OCI-LY7 (cell line): ENCODE measurements at regions of chr1 and their contacts with region 1.

Region 1: GRCh38 chr1:117605774-117606648 is at the start of gene TENT5C:
- DNase-seq: peak; percentile 99
- H3K4me3 ChIP-seq: peak within 1 kb of the TSS; percentile 90
- H3K27ac ChIP-seq: peak within 1 kb of the TSS; percentile 35
- H3K4me1 ChIP-seq: peaks cover 27% of the 10 kb centered on the region
- CTCF ChIP-seq: no peak
- total RNA-seq, gene TENT5C: 11.6 and 13.3 TPM in 2 replicates

Region 2: DNA sequence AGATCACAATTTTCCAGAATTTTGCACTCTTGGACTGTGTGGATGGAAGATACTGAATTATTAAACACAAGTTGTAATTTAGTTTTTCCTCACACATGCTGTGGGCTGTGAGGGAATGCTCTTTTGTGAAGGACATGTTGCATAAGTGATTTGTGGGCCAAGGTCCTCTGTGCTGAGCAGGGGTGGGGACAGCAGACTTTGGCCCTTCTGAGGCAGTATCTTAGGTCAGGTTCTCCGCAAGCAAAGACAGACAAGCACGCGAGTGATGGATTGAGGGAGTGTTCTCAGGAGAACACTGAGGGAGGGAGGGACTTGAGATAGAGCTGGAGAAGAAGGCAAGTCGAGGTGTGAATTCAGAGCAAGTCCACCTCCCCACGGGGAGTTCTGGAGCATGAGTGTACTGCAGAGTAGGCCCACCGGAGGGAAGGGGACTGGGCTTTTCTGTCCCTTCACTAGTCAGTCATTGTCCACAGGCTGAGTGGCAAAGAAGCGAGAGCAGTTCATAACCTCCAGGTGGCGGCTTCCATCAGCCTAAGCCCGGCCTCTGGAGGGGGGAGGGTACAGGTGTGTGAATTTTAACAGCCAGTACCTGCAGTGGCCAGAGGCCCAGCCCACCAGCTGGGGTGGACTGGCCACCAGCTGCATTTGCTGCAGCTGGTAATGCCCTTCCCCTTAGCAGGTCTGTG is 623.5 kb before region 1 on chr1:
- CTCF ChIA-PET with region 1: no interaction called
- POLR2A ChIA-PET with region 1: no interaction called
- intact Hi-C with region 1: no loop called
- DNase-seq: no peak
- H3K4me3 ChIP-seq: no peak overlapping the region
- H3K27ac ChIP-seq: no peak overlapping the region
- H3K4me1 ChIP-seq: no peaks in the 10 kb centered on the region
- CTCF ChIP-seq: no peak

Region 3: DNA sequence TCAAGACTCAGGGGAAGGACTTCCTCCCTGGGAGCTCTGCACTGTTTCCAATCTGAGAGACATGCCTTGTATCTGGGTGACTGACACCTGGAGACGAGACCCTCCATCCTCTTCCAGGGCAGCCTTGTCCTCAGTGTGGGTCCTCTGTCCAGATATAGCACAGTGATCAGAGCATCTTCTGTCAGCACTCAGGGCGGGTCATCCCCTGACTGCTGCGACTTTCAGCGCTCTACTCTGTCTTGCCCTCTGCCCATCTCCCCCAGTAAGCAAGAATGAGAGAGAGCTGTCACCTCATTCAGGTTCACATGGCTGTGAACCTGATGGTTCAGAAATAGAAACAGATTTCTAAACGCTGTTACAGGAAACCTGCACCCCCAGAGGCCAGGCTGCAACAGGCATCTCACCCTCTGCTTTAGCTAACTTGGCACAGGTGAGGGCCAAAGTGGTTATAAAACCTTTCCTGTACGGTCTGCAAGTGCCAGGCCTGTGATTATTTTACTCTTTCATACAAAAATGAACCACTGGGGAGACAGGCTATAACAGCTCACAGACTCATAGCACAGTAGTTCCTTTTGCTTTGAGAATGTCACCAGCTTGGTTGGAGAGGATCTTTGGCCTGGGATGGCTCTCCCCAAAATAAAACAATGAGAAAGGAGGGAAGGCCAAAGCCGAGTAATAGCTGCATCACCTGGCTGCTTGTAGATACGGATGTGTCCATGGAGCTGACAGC is 11.6 kb before region 1 on chr1:
- CTCF ChIA-PET with region 1: interaction called, 3 read pairs
- POLR2A ChIA-PET with region 1: interaction called, 12 read pairs
- intact Hi-C with region 1: no loop called
- DNase-seq: peak; percentile 67
- H3K4me3 ChIP-seq: no peak overlapping the region
- H3K27ac ChIP-seq: peak overlapping the region; percentile 14
- H3K4me1 ChIP-seq: peaks cover 30% of the 10 kb centered on the region
- CTCF ChIP-seq: peak; percentile 67

Region 4: DNA sequence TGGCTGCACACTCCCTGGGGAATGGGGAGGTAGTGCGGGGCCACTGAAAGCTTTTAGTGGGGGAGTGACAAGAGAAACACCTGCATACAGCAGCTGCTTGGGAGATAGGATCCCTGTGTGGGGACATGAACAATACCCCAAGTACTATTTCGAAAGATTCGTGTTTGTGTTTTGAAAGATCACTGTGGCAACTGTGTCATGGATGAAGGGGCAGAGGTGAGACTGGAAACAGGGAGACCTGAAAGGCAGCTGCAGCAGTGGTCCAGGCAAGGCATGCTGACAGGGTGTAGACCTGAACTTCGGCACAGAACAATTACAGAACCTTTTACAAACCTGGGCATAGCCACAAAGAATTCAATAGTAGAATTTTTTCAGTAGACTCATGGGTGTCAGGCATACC is 32.7 kb after region 1 on chr1:
- CTCF ChIA-PET with region 1: no interaction called
- POLR2A ChIA-PET with region 1: interaction called, 281 read pairs
- intact Hi-C with region 1: loop called (anchors 1 kb)
- DNase-seq: peak; percentile 83
- H3K4me3 ChIP-seq: peak overlapping the region; percentile 26
- H3K27ac ChIP-seq: peak overlapping the region; percentile 70
- H3K4me1 ChIP-seq: peaks cover 100% of the 10 kb centered on the region
- CTCF ChIP-seq: no peak

Region 5: DNA sequence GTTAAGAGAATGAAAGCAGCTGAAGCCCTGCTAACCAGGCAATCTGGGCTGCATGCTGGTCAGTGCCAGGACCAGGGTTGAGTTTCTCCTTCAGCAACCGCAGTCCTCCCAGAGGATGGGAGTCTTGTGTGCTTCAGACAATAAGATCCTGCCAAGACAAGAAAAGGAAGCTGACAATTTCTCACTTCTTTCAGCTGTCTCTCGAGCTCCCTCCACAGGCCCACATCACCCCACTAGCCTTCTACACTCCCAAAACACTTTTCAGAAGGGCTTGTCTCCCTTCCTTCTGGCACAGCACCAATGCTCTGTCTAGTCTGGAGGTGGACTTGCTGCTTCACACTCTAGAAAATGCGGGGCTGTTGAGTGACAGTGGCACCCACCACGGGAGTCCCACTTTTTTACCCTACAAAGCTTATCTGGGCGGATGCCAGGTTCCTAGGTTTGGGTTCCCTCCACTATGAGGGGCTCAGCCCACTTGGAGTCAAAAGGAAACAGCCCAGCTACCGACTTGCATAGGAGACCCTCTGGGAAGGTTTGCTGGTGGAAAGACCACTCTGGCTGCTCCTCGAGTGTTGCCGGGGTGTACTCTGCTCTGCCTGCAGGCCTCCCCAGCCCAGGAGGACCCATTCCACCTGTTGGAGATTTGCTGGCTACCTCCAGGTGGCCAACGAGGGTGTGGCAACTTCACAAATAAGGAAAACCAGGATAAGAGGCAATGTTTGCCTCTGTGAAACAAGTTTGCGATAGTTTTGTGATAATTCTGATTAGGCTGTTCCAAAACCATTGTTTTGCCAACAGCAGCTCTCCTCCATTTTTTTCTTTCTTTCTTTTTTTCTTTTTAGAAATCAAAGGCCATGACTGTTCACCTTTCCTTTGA is 68.7 kb after region 1 on chr1:
- CTCF ChIA-PET with region 1: interaction called, 4 read pairs
- POLR2A ChIA-PET with region 1: interaction called, 9 read pairs
- intact Hi-C with region 1: loop called (anchors 1 kb)
- DNase-seq: peak; percentile 87
- H3K4me3 ChIP-seq: no peak overlapping the region
- H3K27ac ChIP-seq: peak overlapping the region; percentile 1
- H3K4me1 ChIP-seq: peaks cover 54% of the 10 kb centered on the region
- CTCF ChIP-seq: peak; percentile 92

Region 6: GRCh38 chr1:117710710-117711109 is 104.7 kb after region 1 on chr1:
- CTCF ChIA-PET with region 1: no interaction called
- POLR2A ChIA-PET with region 1: no interaction called
- intact Hi-C with region 1: no loop called
- DNase-seq: peak; percentile 45
- H3K4me3 ChIP-seq: no peak overlapping the region
- H3K27ac ChIP-seq: no peak overlapping the region
- H3K4me1 ChIP-seq: no peaks in the 10 kb centered on the region
- CTCF ChIP-seq: peak; percentile 80

Region 7: GRCh38 chr1:117758444-117759316 is 152.7 kb after region 1 on chr1:
- CTCF ChIA-PET with region 1: no interaction called
- POLR2A ChIA-PET with region 1: interaction called, 3 read pairs
- intact Hi-C with region 1: loop called (anchors 5 kb)
- DNase-seq: peak; percentile 89
- H3K4me3 ChIP-seq: no peak overlapping the region
- H3K27ac ChIP-seq: no peak overlapping the region
- H3K4me1 ChIP-seq: peaks cover 5% of the 10 kb centered on the region
- CTCF ChIP-seq: peak; percentile 95